Cardiac septum (tissue), 1 donor: ENCODE measurements at regions of chr1 and their contacts with region 1.

Region 1: DNA sequence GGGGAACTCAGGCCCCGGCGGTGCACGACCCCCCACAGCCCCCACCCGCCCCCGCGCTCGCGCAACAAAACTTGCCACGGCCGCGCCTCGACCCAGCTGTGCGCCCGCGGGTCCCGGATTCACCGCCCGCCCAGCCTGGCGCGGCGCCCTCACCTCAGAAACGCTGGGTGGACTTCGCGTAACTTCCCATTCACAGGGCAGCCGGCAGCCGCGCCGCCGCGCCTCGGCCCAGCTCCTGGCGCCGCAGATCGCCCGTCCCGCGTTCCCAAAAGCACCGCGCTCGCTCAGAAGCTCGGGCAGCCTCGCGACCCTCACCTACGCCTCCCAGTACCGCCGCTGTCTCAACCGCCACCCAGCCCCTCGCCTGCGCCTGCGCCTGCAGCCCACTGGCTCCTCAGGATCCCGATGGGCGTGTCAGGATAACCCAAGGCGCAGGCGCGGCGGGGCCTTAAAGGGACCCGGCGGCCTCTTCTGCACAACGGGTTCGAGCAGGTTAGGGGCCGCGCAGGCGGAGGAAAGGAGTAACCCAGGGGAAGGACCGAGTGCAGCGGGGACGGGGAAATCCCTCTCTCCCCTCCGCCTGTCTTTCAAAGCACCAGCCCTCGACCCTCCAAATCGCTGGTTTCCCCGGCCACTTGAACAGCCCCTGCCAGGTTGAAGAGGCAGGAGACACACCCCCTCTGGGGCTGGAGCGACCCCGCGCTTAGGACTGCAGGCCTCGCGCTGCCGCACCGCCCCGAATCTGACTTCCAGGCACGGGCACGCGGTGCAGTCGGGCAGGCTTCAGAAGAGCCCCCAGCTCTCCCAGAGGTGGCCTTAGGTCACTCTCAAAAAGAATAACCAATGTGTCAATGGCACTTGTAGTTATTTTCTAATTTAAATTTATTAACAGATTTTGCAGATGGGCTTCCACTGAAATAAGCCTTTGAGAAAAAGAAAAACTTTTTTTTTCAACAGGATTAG is at the start of gene NBPF1:
- DNase-seq: peak; percentile 99
- total RNA-seq, gene NBPF1: 12.6 TPM

Region 2: DNA sequence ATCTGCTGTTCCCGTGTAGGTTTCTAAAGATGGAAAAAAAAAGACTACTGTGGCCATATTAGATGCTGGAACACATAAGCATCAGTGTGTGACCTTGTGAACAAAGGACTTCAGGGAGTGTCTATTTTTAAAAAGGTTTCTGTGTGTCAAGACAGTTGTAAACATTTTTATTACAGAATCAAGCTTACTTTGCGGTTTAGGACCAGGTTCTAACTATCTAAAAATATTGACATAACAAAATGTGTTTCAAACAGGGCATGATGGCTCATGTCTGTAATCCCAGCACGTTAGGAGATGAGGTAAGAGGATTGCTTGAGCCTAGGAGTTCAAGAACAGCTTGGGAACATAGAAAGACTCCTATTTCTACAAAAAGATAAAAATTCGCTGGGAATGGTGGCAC is 1003.3 kb before region 1 on chr1:
- intact Hi-C with region 1: no loop called
- DNase-seq: no peak

Region 3: DNA sequence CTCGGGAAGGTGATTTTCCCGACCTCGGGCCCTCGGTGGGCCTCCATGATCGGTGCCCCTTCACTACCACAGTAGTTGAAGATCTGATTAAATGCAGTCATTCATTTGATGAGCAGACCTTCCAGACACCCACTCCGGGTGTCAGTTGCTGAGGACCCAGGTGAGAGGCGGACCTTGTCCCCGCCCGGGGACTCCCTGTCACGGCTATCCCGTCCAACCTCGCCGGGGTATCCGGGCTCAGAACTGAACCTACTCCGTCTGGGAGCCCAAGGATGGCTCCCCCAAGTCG is 30.7 kb after region 1 on chr1:
- intact Hi-C with region 1: loop called (anchors 1 kb)
- DNase-seq: no peak